ENCODE measurements at regions of chr19 and their contacts with region 1.

Region 1: DNA sequence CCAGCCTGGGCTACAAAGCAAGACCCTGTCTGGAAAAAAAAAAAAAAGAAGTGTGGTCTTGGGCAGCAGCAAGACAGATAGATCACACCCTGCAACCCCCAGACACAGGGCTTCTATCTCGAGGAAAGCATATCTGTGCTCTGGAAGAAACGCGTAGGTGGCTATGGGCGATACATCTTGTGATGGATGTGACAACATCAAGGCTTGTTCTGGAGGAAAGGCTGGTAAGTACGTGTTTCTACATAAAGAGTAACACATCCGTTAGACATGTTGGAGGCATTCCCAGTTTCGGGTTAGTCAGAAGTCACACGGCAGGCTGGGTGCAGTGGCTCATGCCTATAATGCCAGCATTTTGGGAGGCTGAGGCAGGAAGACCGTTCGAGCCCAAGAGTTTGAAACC is 6.6 kb upstream of the DHDH start:
- DNase-seq: peak; percentile 80 to 88
- H3K4me3 ChIP-seq: no peak overlapping the region
- H3K27ac ChIP-seq: peak overlapping the region; percentile 74 to 78
- H3K4me1 ChIP-seq: peaks cover 0 to 3% of the 10 kb centered on the region in 2 donors
- H3K27me3 ChIP-seq: no peaks in the 10 kb centered on the region
- CTCF ChIP-seq: no peak

Region 2: DNA sequence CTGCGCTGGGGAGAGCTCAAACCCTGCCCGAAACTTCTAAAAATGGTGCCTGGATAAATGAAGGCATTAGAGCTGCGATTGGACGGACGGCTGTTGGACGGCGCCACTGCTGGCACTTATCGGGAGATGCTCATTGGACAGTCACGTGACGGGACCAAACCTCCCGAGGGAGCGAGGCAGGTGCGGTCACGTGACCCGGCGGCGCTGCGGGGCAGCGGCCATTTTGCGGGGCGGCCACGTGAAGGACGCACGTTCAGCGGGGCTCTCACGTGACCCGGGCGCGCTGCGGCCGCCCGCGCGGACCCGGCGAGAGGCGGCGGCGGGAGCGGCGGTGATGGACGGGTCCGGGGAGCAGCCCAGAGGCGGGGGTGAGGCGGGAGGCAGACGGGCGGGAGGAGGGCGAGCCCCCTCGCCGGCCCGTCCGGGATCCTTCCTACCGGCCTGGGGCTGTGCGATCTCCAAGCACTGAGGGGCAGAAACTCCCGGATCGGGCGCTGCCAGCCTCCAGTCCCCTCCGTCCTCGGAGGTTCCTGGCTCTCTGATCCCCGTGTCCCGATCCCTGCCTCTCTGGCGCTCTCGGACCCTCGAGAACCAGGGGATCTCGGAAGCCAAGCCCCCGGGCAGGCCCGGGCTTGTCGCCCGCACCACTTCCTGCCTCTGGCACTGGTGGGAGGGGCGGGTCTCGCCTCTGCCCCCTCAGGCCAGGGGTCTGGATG is 27.8 kb after region 1 on chr19 and contains the start of gene BAX:
- intact Hi-C with region 1: loop called (anchors 2 kb)
- DNase-seq: peak; percentile 92 to 99
- H3K4me3 ChIP-seq: peak within 1 kb of the TSS; percentile 88 to 95
- H3K27ac ChIP-seq: peak within 1 kb of the TSS; percentile 86 to 94
- H3K4me1 ChIP-seq: peaks cover 5 to 13% of the 10 kb centered on the region in 2 donors
- H3K27me3 ChIP-seq: no peaks in the 10 kb centered on the region
- CTCF ChIP-seq: no peak
- total RNA-seq, gene BAX: 182 TPM

Measured in ascending aorta (tissue), 2 donors.